Ovary (tissue), 10 donors: ENCODE measurements at regions of chr5 and their contacts with region 1.

Region 1: GRCh38 chr5:35161652-35162273 is 68.5 kb downstream of the PRLR start:
- DNase-seq: no peak
- H3K4me3 ChIP-seq: no peak overlapping the region
- H3K27ac ChIP-seq: peak overlapping the region in 1 of 2 donors; percentile 32
- H3K4me1 ChIP-seq: peaks cover 19% of the 10 kb centered on the region
- H3K27me3 ChIP-seq: no peaks in the 10 kb centered on the region
- CTCF ChIP-seq: no peak
- EP300 ChIP-seq: no peak
- POLR2A ChIP-seq: no peak

Region 2: GRCh38 chr5:34789021-34789531 is 372.7 kb before region 1 on chr5:
- intact Hi-C with region 1: loop called in 1 of 4 experiments (anchors 5 kb)
- DNase-seq: no peak
- H3K4me3 ChIP-seq: no peak overlapping the region
- H3K27ac ChIP-seq: no peak overlapping the region
- H3K4me1 ChIP-seq: peaks cover 3% of the 10 kb centered on the region
- H3K27me3 ChIP-seq: no peaks in the 10 kb centered on the region
- CTCF ChIP-seq: no peak
- EP300 ChIP-seq: no peak
- POLR2A ChIP-seq: no peak

Region 3: DNA sequence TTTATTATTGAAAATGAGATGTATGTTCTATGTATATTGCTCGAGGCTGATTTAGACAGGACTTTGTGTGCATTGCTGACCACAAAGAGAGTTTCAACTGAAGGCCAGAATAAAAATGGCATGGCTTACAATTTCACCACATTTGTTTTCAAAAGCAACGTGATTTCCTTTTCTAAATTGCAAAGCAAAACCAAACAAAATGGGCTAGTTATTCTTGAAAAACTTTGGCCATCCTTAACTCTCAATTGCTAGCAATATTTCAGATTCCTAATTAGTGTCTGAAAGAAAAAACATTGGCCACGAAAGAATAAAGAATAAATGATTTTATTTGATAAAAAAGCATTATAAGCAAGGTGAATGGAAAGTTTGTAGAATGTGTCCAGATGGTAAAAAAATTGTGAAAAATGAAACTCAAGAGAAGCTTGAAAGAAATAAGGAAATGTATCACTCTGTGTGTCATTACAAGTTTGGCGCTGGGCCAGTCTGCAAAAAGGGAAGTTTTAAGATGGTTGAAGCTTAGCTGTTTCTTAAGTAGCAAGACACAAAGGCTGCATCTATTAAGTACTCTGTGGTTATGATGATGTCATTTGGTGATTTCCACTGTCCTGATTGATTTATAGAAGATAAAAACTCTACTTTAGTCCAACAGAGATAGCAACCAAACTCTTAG is 157.7 kb after region 1 on chr5:
- intact Hi-C with region 1: no loop called
- DNase-seq: peak in 1 of 5 donors; percentile 28
- H3K4me3 ChIP-seq: no peak overlapping the region
- H3K27ac ChIP-seq: no peak overlapping the region
- H3K4me1 ChIP-seq: no peaks in the 10 kb centered on the region
- H3K27me3 ChIP-seq: no peaks in the 10 kb centered on the region
- CTCF ChIP-seq: no peak
- EP300 ChIP-seq: no peak
- POLR2A ChIP-seq: no peak